Vagina (tissue), 2 donors: ENCODE measurements at regions of chr6 and their contacts with region 1.

Region 1: DNA sequence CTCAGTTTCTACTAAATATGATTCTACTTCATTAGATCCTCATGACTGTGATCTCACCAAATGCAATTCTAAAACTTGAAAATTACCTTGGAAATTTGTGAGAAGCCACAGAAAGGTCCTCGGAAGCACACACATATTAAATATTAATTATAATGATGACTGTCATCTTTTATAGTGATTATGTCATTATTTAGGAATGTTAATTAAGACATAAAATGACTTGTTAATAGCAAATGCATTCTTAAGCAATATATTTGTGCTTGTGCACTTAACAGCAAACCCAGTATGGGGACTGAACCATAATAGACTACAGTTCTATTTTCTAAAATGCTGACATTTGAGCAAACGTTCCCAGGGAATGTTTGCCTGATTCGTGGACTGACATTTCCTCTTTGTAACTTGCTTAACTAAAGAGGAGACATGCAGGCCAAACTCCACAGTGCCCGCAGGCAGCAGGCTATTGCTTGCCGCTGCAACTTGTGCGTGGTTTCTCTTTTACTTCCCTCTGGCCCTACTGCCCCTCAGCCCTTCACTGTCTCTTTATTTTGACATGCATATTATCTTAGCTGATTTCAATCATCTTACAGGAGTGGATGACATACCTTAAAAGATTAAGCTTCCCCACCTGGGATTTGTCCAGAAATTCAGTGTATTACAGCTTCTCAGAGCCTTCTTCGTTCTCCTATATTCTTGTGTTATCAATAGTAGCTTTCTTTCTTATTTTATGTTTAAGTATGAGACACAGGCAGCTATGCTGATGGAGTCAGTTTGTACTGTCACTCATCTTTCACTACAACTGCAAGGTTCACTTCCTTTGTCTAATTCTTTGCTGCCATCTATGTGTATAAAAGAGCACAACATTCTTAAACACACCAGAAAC is 141.5 kb downstream of the GMDS start:
- DNase-seq: no peak
- H3K4me3 ChIP-seq: no peak overlapping the region
- H3K27ac ChIP-seq: no peak overlapping the region
- H3K4me1 ChIP-seq: no peaks in the 10 kb centered on the region
- H3K27me3 ChIP-seq: no peaks in the 10 kb centered on the region
- CTCF ChIP-seq: peak in 2 of 3 experiments; percentile 9 to 26
- POLR2A ChIP-seq: no peak

Region 2: DNA sequence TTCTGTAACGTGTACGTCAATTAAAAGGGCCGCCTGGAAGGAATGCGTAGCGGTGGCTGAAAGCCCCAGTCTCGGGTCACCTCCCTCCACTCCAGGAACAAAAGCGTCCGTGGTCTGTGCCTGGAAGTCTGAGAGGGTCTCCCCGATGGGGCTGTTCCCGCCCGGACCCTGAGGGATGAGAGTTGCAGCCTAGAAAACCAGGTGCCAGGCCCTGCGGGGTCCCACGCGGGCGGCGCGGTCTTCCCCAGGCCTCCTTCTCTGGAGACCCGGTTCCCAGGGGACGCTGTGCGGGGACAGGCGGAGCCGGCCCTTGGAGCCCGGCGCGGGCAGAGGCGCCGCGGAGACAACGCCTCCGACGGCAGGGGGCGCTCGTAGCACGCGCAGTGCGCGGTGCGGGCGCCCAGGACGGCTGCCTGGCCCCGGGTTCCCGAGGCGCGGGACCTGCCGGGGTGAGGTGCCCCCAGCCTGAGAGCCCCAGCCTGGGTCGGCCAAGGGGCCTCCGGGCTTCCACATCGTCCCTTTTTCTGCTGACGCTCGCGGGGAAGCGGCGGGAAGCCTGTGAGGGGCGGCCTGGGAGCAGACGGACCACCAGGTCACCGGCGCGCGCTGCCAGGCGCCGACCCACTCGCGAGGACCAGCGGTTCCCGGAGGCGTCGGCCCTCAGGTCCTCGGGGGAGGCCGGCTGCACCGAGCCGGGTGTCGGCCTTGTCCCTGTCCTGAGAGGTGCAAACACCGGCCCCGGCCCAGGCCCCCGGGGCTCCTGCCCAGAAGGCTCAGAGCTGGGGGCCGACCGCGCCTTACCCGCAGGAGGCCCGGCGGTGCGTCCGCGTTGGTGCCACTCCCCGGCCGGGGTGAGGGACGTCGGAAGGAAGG is 499.5 kb before region 1 on chr6:
- intact Hi-C with region 1: loop called (anchors 5 kb)
- DNase-seq: no peak
- H3K4me3 ChIP-seq: peak overlapping the region; percentile 40 to 43
- H3K27ac ChIP-seq: no peak overlapping the region
- H3K4me1 ChIP-seq: peaks cover 44% of the 10 kb centered on the region
- H3K27me3 ChIP-seq: peaks cover 13% of the 10 kb centered on the region
- CTCF ChIP-seq: peak; percentile 80 to 98 (median 82)
- POLR2A ChIP-seq: no peak